H1 (cell line): ENCODE measurements at regions of chr3 and their contacts with region 1.

Region 1: GRCh38 chr3:49454458-49454857 is 15.6 kb upstream of the DAG1 start:
- DNase-seq: peak; percentile 61 to 71
- H3K4me3 ChIP-seq: no peak overlapping the region
- H3K27ac ChIP-seq: no peak overlapping the region
- H3K4me1 ChIP-seq: peaks cover 5 to 13% (median 11%) of the 10 kb centered on the region in 4 experiments
- H3K27me3 ChIP-seq: no peaks in the 10 kb centered on the region
- CTCF ChIP-seq: peak; percentile 71 to 82 (median 81)
- EP300 ChIP-seq: no peak
- POLR2A ChIP-seq: no peak
- RAD21 ChIP-seq: peak; percentile 94 to 96

Region 2: GRCh38 chr3:49327485-49327884 is 127.0 kb before region 1 on chr3:
- CTCF ChIA-PET with region 1: interaction called, 13 read pairs
- POLR2A ChIA-PET with region 1: no interaction called
- DNase-seq: no peak
- H3K4me3 ChIP-seq: no peak overlapping the region
- H3K27ac ChIP-seq: no peak overlapping the region
- H3K4me1 ChIP-seq: no peaks in the 10 kb centered on the region
- H3K27me3 ChIP-seq: no peaks in the 10 kb centered on the region
- CTCF ChIP-seq: peak in 2 of 3 experiments; percentile 3 to 39; a peak in 2 of 4 replicates
- EP300 ChIP-seq: no peak
- POLR2A ChIP-seq: no peak
- RAD21 ChIP-seq: peak; percentile 18 to 37; a peak in 3 of 4 replicates

Region 3: GRCh38 chr3:49411968-49412631 is 42.4 kb before region 1 on chr3 and contains the starts of genes RHOA and TCTA:
- CTCF ChIA-PET with region 1: interaction called, 20 read pairs
- POLR2A ChIA-PET with region 1: interaction called, 19 read pairs
- DNase-seq: peak; percentile 93 to 95
- H3K4me3 ChIP-seq: peak within 1 kb of the TSS; percentile 76 to 99 (median 90)
- H3K27ac ChIP-seq: peak within 1 kb of the TSS; percentile 86
- H3K4me1 ChIP-seq: peaks cover 3 to 11% (median 8%) of the 10 kb centered on the region in 4 experiments; a peak in 6 of 7 replicates
- H3K27me3 ChIP-seq: no peaks in the 10 kb centered on the region
- CTCF ChIP-seq: 0 out of 4 replicates have a peak, but pooled peaks of 1 of the 3 experiments have one; percentile 8
- EP300 ChIP-seq: no peak
- POLR2A ChIP-seq: peak; percentile 95 to 99
- RAD21 ChIP-seq: no peak; a peak in 1 of 4 replicates
- total RNA-seq, gene RHOA: 386 and 397 TPM in 2 replicates
- total RNA-seq, gene TCTA: 6.2 and 7.4 TPM in 2 replicates

Region 4: DNA sequence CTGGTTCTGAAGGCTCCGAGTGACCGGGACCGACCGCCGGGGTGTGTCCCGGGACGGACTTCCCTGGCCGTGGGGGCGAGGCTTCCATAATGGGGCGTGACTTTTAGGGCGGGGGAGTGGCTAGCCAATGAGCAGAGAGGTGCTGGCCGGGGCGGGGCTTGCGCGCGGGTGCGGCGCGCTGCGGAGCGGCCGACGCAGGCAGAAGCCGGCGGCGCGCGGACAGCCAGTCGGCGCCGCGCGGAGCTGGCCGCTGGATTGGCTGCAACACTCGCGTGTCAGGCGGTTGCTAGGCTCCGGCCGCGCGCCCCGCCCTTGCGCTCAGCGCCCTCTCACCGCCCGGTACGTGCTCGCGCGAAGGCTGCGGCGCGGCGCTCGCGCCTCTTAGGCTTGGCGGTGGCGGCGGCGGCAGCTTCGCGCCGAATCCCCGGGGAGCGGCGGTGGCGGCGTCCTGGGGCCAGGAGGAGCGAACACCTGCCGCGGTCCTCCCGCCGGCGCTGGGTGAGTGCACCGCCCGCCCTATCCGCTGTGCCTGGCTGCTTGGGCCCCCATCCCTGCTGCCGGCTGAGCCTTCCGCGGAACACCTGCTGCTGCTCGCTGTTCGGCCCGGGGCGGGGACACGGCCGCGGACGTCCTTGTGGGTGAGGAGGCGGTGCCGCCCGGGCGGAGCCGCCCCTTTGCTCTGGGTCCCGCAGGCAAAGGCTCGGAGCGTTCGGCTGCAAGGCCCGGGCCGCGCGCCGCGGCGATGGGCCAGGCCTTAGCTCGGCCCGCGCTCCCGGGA is 15.7 kb after region 1 on chr3 and contains the start of gene DAG1:
- CTCF ChIA-PET with region 1: interaction called, 32 read pairs
- POLR2A ChIA-PET with region 1: interaction called, 205 read pairs
- DNase-seq: peak; percentile 87 to 98
- H3K4me3 ChIP-seq: peak within 1 kb of the TSS; percentile 74 to 94 (median 84)
- H3K27ac ChIP-seq: peak within 1 kb of the TSS; percentile 92
- H3K4me1 ChIP-seq: peaks cover 6 to 19% (median 13%) of the 10 kb centered on the region in 4 experiments
- H3K27me3 ChIP-seq: no peaks in the 10 kb centered on the region
- CTCF ChIP-seq: no peak
- EP300 ChIP-seq: no peak
- POLR2A ChIP-seq: peak; percentile 58 to 83
- RAD21 ChIP-seq: no peak
- total RNA-seq, gene DAG1: 137 and 138 TPM in 2 replicates

Region 5: DNA sequence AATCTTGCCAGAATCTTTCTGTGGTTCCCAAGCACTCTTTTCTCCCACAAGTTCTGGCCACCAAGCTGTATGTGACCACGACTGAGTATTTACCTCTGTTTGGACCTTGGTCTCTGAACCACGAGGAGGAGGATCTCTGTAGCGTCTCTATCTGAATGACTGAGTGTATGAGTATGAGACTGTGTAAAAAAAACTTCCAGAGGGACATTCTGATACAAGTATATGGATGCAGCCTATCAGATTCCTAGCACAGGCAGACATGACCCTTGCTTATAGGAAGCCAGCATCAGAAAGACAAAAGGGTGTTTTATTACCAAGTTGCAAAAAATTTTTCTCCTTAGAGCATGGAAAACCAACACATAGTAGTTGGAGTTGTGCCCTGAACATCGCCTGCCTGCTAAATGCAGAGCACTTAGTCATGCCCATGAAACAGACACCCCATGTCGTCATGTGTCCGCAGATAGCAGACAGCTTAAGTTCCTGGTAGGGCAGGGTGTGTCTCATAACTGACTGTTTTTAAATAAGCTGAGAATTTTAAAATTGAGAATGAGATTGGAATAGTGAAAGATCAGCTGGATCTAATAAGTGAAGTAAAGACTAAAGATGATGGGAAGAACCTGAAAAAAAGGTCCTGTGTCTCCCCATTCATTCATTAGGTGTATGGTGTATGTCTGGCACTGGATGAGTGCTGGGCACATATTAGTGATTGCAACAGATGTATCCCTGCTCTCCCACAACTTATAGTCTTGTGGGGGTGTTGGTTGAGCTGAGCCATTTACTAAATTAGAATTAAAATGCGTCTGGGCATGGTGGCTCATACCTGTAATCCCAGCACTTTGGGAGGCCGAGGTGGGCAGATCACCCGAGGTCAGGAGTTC is 46.5 kb after region 1 on chr3:
- CTCF ChIA-PET with region 1: interaction called, 14 read pairs
- POLR2A ChIA-PET with region 1: interaction called, 5 read pairs
- DNase-seq: no peak
- H3K4me3 ChIP-seq: no peak overlapping the region
- H3K27ac ChIP-seq: no peak overlapping the region
- H3K4me1 ChIP-seq: no peaks in the 10 kb centered on the region
- H3K27me3 ChIP-seq: no peaks in the 10 kb centered on the region
- CTCF ChIP-seq: no peak
- EP300 ChIP-seq: no peak
- POLR2A ChIP-seq: no peak
- RAD21 ChIP-seq: no peak

Region 6: DNA sequence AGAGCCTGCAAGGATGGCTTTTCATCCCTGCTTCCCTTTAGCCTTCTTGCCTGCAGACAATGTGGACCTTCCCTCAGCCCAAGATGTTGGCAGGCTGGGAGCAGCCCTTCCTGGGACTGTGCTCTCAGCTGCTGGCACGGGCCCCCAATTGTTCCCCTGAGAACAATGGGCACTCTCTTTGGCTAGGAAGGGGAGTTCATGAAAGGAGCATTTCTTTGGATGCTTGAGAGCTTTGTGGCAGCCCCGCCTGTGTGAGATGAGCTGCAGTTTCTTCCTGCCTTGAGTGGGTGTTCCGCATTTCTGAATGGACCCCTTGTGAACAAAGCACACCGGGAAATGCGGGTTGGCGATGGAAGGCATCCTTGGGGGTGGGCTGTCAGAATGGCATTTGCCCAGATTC is 64.8 kb after region 1 on chr3:
- CTCF ChIA-PET with region 1: interaction called, 25 read pairs
- POLR2A ChIA-PET with region 1: interaction called, 4 read pairs
- DNase-seq: no peak
- H3K4me3 ChIP-seq: no peak overlapping the region
- H3K27ac ChIP-seq: no peak overlapping the region
- H3K4me1 ChIP-seq: peaks cover 0 to 4% (median 0%) of the 10 kb centered on the region in 4 experiments; a peak in 3 of 7 replicates
- H3K27me3 ChIP-seq: no peaks in the 10 kb centered on the region
- CTCF ChIP-seq: no peak
- EP300 ChIP-seq: no peak
- POLR2A ChIP-seq: no peak
- RAD21 ChIP-seq: no peak

Region 7: DNA sequence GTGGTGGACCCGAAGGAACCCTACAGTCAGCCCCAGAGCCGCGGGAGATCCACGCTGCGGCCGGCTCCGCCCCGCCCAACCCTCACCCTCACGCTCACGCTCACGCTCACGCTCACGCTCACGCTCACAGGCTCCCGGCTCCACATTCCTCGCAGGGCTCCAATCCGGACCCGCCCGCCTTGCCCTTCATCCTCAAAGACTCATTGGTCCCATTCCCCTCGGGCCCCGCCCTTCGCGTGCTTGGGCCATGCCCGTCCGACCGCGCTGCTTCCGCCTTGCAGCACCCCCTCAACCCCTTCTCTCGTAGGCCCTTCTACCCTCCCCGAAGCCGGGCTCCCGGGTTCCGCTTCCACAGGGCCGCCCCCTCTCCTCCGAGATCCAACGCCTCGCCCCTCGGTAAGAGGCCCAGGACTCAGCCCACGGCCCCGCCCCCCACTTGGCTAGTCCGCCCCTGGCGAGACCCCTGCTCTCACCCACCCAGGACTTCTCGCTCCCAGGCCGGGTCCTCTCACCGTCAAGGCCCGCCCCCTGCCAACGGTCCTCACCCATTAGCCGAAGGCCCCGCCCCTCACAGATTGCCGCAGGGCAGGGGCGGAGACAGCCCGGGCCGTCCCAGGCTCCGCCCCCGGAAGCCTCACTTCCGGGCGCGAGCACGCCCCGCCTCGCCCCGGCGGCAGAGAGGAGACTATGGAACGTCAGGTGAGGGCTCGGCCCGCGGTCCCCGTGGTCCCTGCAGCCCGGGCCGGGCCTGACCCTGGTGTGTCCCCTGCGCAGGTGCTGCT is 219.4 kb after region 1 on chr3 and contains the start of gene APEH:
- CTCF ChIA-PET with region 1: interaction called, 20 read pairs
- POLR2A ChIA-PET with region 1: interaction called, 5 read pairs
- DNase-seq: peak; percentile 88 to 99
- H3K4me3 ChIP-seq: peak within 1 kb of the TSS; percentile 84 to 91 (median 86)
- H3K27ac ChIP-seq: peak within 1 kb of the TSS; percentile 90
- H3K4me1 ChIP-seq: peaks cover 0 to 8% (median 5%) of the 10 kb centered on the region in 4 experiments; a peak in 4 of 7 replicates
- H3K27me3 ChIP-seq: no peaks in the 10 kb centered on the region; a peak in 1 of 7 replicates
- CTCF ChIP-seq: no peak
- EP300 ChIP-seq: 0 out of 3 replicates have a peak, but pooled peaks of 1 of the 2 experiments have one; percentile 6
- POLR2A ChIP-seq: peak in 1 of 2 experiments; percentile 66; a peak in 2 of 3 replicates
- RAD21 ChIP-seq: no peak
- total RNA-seq, gene APEH: 222 and 236 TPM in 2 replicates